ENCODE measurements at regions of chr17 and their contacts with region 1.

Region 1: GRCh38 chr17:43393944-43394482 is 4.8 kb upstream of the ARL4D start:
- DNase-seq: peak; percentile 74
- H3K4me3 ChIP-seq: no peak overlapping the region
- H3K27ac ChIP-seq: no peak overlapping the region
- H3K27me3 ChIP-seq: no peaks in the 10 kb centered on the region
- CTCF ChIP-seq: peak; percentile 94

Region 2: DNA sequence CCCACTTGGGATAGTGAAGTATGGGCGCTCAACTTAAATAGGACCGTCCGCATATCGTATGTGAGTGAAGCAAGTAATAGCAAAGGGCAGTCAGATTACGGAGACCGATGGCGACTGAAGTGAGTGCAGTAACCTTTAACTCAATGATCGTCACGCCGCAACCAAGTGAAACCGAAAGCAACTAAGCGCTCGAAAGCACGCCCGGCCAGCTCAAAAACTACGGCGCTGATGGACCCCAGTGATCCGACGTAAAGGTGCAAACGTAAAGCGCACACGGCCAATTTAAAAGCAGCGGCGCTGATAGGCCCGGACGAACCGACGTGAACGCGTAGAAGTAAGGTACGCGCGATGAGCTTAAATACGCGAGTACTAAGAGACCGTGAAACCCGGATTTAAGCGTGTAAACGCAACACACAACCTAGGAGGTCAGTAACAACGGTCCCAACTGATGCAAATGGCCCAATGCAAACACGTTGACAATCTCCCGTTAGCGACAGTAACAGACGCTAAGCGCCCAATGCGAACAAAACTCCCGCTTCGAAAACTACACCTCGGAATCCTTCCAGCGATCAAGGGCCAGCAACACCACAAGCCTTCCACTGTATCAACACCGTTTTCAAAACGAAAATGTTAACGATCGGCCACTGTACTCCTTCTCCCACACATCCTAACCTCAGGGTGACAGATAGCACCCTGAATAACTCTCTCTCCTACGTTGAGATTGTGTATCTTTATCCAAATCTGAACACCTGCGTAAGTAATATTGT is 33.1 kb before region 1 on chr17:
- CTCF ChIA-PET with region 1: interaction called, 3 read pairs
- POLR2A ChIA-PET with region 1: interaction called, 39 read pairs
- DNase-seq: peak; percentile 98
- H3K4me3 ChIP-seq: peak overlapping the region; percentile 58
- H3K27ac ChIP-seq: peak overlapping the region; percentile 87
- H3K27me3 ChIP-seq: no peaks in the 10 kb centered on the region
- CTCF ChIP-seq: no peak

Region 3: DNA sequence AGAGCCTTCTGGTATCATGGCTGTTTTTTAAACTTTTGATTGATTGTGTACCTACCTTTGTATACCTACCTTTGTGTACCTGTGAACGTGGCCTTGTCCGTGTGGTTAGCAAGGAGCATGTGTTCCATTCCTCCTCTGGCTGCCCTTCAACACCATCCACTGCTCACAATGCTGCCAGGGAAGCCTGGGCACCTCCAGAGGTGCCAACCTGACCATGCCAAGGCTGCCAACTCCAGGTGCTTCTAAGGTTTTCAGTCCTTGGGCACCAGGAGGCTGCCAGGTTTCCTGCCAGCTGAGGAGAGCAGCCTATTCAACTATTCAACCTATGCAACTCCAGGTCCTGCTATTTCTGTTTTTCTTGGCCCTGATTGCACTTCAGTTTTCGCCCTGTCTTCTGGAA is 12.8 kb before region 1 on chr17:
- CTCF ChIA-PET with region 1: no interaction called
- POLR2A ChIA-PET with region 1: no interaction called
- DNase-seq: no peak
- H3K4me3 ChIP-seq: no peak overlapping the region
- H3K27ac ChIP-seq: no peak overlapping the region
- H3K27me3 ChIP-seq: no peaks in the 10 kb centered on the region
- CTCF ChIP-seq: no peak

Region 4: DNA sequence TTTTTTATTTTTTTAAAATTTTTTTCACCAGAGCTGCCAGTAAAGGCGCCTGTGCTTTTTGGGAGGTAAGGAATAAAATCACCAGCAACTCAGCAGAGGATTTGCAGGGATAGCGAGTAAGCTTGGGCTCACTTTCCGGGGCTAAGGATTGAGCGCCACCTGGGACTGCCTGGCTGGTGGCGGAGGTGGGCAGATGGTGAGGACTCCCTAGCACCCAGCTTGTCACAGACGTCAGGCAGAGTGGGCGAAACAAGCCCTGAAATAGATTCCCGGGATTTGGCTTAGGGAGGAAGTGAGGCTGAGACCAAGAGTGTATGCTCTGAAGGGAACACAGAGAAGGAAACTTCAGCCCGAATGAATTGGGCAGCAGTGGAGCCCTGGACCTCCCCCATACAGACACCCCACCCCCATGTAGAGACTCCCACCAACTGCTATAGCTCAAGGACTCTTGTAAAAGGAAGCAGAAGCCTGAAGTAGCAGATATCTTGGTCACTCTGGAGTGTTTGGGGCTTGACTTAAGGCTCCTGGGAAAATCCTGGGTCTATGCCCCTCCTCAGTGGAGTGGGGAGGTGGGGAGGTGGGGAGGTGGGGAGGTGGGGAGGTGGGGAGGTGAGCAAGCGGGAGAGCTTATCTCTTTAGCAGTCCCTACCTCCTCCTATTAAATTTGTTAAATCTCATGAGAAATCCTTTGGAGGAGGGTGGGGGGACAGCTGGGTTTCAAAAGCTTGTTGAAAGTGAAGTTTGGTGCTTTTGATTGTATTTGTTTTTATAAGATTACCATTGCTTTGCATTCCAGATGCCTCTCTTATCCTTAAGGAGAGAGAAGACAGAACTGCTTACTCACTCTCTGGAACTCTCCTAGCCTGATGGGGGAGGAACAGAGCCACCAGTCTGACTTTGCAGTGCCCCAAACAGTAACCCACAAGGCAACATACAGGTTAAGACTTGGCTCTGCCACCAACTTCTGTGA is 12.9 kb after region 1 on chr17:
- CTCF ChIA-PET with region 1: interaction called, 9 read pairs
- POLR2A ChIA-PET with region 1: interaction called, 34 read pairs
- DNase-seq: peak; percentile 54
- H3K4me3 ChIP-seq: no peak overlapping the region
- H3K27ac ChIP-seq: peak overlapping the region; percentile 89
- H3K27me3 ChIP-seq: no peaks in the 10 kb centered on the region
- CTCF ChIP-seq: no peak

Region 5: GRCh38 chr17:43456661-43457361 is 62.8 kb after region 1 on chr17:
- CTCF ChIA-PET with region 1: no interaction called
- POLR2A ChIA-PET with region 1: interaction called, 11 read pairs
- DNase-seq: no peak
- H3K4me3 ChIP-seq: no peak overlapping the region
- H3K27ac ChIP-seq: no peak overlapping the region
- H3K27me3 ChIP-seq: no peaks in the 10 kb centered on the region
- CTCF ChIP-seq: no peak

Region 6: DNA sequence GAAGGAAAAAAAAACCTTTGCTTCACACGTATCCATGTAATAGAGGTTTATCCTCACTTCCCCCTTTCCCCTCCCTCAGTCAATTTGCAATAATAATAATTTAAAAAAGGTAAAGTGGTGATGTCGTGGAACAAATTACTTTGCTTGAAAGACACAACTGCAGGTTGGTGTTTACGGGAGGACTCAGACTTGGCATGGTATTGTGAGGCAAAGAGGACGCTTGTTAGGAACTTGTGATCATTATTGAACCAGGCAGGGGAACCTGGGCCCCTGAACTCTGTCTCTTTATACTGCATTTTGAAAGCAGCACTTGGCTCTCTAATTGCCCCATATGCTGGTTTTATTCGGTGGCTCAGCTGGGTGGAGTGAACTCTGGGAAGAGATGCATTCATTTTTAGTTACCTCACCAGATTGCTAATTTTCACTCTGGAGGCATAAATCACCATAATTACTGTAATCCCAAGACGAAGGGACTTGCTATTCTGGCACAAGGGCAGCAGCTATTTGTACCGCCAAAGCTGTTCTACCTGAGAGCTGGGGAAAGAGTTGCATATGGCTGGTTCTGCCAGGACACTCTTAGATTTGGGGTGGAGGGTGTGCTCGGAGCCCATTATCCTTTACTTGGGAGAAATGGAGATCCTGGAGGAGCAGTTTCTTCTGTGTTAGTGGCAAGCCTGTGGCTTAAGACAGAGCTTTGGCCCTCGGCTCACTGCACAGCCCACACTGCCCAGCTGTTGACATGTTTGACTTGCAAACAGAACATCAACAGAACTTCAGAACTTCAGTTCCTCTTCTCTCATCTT is 84.0 kb after region 1 on chr17:
- CTCF ChIA-PET with region 1: interaction called, 395 read pairs
- POLR2A ChIA-PET with region 1: interaction called, 39 read pairs
- DNase-seq: no peak
- H3K4me3 ChIP-seq: no peak overlapping the region
- H3K27ac ChIP-seq: no peak overlapping the region
- H3K27me3 ChIP-seq: no peaks in the 10 kb centered on the region
- CTCF ChIP-seq: no peak

Measured in AG04450 (cell line).